ENCODE measurements at regions of chr6 and their contacts with region 1.

Region 1: DNA sequence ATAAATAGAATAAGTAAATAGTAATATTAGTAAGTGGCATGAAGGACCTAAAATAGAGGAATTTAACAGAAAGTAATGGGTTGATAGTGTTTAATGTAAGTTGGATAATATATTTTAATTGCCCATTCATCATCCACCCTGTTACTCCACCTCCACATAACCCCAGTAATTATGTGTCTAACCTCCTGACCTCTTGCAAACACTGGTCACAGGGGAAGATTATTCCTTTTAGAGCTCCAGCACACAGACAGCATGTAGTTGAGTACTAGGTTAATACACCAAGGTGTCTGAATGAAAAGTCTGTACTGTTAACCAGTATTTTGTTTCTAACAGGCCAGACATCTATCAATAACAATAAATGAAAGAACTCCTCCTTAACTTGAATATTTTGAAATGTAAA is 92.4 kb upstream of the EYS start:
- DNase-seq: no peak
- ATAC-seq: no peak
- H3K4me3 ChIP-seq: no peak overlapping the region
- H3K4me3 Mint-ChIP-seq: no peak overlapping the region
- H3K27ac ChIP-seq: no peak overlapping the region
- H3K27ac Mint-ChIP-seq: no peak overlapping the region
- H3K4me1 ChIP-seq: no peaks in the 10 kb centered on the region
- H3K4me1 Mint-ChIP-seq: no peaks in the 10 kb centered on the region
- H3K27me3 ChIP-seq: no peaks in the 10 kb centered on the region
- H3K27me3 Mint-ChIP-seq: no peaks in the 10 kb centered on the region
- CTCF ChIP-seq: no peak

Region 2: GRCh38 chr6:65771946-65772345 is 27.4 kb before region 1 on chr6:
- CTCF ChIA-PET with region 1: no interaction called
- POLR2A ChIA-PET with region 1: no interaction called
- intact Hi-C with region 1: no loop called
- DNase-seq: no peak
- ATAC-seq: no peak
- H3K4me3 ChIP-seq: no peak overlapping the region
- H3K4me3 Mint-ChIP-seq: no peak overlapping the region
- H3K27ac ChIP-seq: no peak overlapping the region
- H3K27ac Mint-ChIP-seq: no peak overlapping the region
- H3K4me1 ChIP-seq: no peaks in the 10 kb centered on the region
- H3K4me1 Mint-ChIP-seq: no peaks in the 10 kb centered on the region
- H3K27me3 ChIP-seq: no peaks in the 10 kb centered on the region
- H3K27me3 Mint-ChIP-seq: no peaks in the 10 kb centered on the region
- CTCF ChIP-seq: no peak

Region 3: DNA sequence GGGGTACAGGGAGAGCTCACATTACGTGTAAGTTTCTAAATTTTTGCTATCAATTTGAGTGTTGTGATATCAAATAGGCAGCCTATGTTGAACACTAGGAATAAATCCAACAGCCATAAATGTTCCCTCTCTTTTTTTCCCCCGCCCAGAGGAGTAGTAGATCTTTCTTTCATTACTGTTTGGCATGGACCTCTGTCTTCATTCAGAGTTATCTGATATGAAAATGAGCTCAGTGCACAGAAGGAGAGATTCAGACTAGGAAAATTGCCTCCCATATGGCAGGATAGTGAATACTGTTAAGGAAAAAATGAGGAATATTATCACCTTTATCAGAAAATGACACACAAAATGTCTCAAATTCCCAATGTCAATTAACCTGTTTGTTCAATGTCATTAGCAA is 17.6 kb after region 1 on chr6:
- CTCF ChIA-PET with region 1: no interaction called
- POLR2A ChIA-PET with region 1: no interaction called
- intact Hi-C with region 1: loop called in 1 of 2 experiments (anchors 1 kb)
- DNase-seq: no peak
- ATAC-seq: no peak
- H3K4me3 ChIP-seq: no peak overlapping the region
- H3K4me3 Mint-ChIP-seq: no peak overlapping the region
- H3K27ac ChIP-seq: no peak overlapping the region
- H3K27ac Mint-ChIP-seq: no peak overlapping the region
- H3K4me1 ChIP-seq: no peaks in the 10 kb centered on the region
- H3K4me1 Mint-ChIP-seq: no peaks in the 10 kb centered on the region
- H3K27me3 ChIP-seq: no peaks in the 10 kb centered on the region
- H3K27me3 Mint-ChIP-seq: no peaks in the 10 kb centered on the region
- CTCF ChIP-seq: no peak

Measured in CD8-positive, alpha-beta T cell (primary cell).